Heart left ventricle (tissue), 16 donors: ENCODE measurements at regions of chr6 and their contacts with region 1.

Region 1: GRCh38 chr6:134152767-134153485 is 100.5 kb upstream of the SLC2A12 start:
- DNase-seq: no peak
- ATAC-seq: peak in 1 of 4 donors; percentile 22
- H3K4me3 ChIP-seq: no peak overlapping the region
- H3K27ac ChIP-seq: no peak overlapping the region
- H3K4me1 ChIP-seq: peaks cover 0 to 3% (median 0%) of the 10 kb centered on the region in 12 donors
- H3K27me3 ChIP-seq: no peaks in the 10 kb centered on the region
- CTCF ChIP-seq: no peak
- POLR2A ChIP-seq: no peak

Region 2: DNA sequence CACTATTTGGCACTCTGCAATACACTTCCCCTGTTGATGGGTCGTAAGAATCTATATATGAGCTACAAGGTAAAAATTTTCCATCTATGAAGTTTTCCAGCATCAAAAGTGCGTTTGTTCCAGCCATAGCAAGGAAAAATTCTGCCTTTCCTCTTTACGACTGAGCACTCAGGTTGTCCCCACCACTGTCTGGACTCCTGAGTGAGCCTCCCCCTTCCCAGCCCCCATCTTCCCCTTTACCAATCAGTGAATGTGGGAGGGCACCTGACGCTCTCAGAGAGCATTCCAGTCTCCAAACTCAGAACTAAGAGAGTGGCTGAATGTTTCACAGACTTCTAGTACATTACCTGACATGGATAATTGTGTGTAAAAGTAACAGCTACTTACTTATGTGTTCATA is 797.0 kb after region 1 on chr6 and contains the start of gene ALDH8A1:
- intact Hi-C with region 1: loop called in 1 of 10 experiments (anchors 10 kb)
- DNase-seq: no peak
- ATAC-seq: no peak
- H3K4me3 ChIP-seq: no peak within 1 kb of the TSS
- H3K27ac ChIP-seq: no peak within 1 kb of the TSS
- H3K4me1 ChIP-seq: no peaks in the 10 kb centered on the region
- H3K27me3 ChIP-seq: no peaks in the 10 kb centered on the region
- CTCF ChIP-seq: no peak
- POLR2A ChIP-seq: no peak
- total RNA-seq, gene ALDH8A1: 0.12 to 0.63 (median 0.23) TPM in 7 of 9 donors, not detected in the others